Activated CD8-positive, alpha-beta memory T cell treated with anti-CD3 and anti-CD28 coated beads, Interleukin-2, amount 10 ng/mL, durations not matched to agents 7 days and 5 days (primary cell): ENCODE measurements at regions of chr12 and their contacts with region 1.

Region 1: DNA sequence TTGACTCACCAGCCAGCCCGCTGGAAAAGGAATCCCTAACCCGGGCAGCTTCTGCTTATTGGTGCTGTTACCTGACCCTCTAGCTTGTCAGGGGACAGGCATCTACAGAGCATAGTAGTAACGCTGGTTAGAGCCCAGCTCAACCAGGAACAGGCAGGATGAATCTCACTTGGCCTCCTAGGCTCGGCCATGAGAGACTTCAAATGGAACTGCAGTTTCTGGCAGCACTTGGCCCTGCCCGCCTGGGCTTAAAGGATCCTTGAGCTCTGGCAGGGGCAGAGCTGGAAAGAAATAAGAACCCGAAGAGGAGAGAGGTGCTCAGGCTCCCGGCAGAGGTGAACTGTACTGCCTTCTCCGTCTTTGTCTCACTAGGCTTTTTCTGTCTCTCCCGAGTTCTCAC is 2.3 kb upstream of the LHX5 start:
- DNase-seq: no peak
- ATAC-seq: no peak
- H3K4me3 Mint-ChIP-seq: peak overlapping the region; percentile 55
- H3K27ac Mint-ChIP-seq: no peak overlapping the region
- H3K4me1 Mint-ChIP-seq: peaks cover 16% of the 10 kb centered on the region
- H3K27me3 Mint-ChIP-seq: peaks cover 89% of the 10 kb centered on the region

Region 2: GRCh38 chr12:113462117-113462774 is 11.7 kb before region 1 on chr12:
- CTCF ChIA-PET with region 1: interaction called, 14 read pairs
- DNase-seq: peak; percentile 70
- ATAC-seq: peak; percentile 55
- H3K4me3 Mint-ChIP-seq: no peak overlapping the region
- H3K27ac Mint-ChIP-seq: peak overlapping the region; percentile 59
- H3K4me1 Mint-ChIP-seq: peaks cover 14% of the 10 kb centered on the region
- H3K27me3 Mint-ChIP-seq: peaks cover 74% of the 10 kb centered on the region

Region 3: GRCh38 chr12:113485330-113485729 is 11.4 kb after region 1 on chr12:
- CTCF ChIA-PET with region 1: no interaction called
- DNase-seq: no peak
- ATAC-seq: no peak
- H3K4me3 Mint-ChIP-seq: no peak overlapping the region
- H3K27ac Mint-ChIP-seq: no peak overlapping the region
- H3K4me1 Mint-ChIP-seq: no peaks in the 10 kb centered on the region
- H3K27me3 Mint-ChIP-seq: peaks cover 26% of the 10 kb centered on the region